ENCODE measurements at regions of chr12 and their contacts with region 1.

Region 1: GRCh38 chr12:130916251-130916911 is 37.3 kb upstream of the ADGRD1 start:
- DNase-seq: peak; percentile 82
- H3K4me3 ChIP-seq: peak overlapping the region in 1 of 2 experiments; percentile 32; a peak in 1 of 4 replicates
- H3K27ac ChIP-seq: no peak overlapping the region
- H3K4me1 ChIP-seq: peaks cover 0 to 4% of the 10 kb centered on the region in 2 experiments; a peak in 1 of 4 replicates
- H3K27me3 ChIP-seq: no peaks in the 10 kb centered on the region
- CTCF ChIP-seq: peak; percentile 31
- EP300 ChIP-seq: no peak
- RAD21 ChIP-seq: peak; percentile 96

Region 2: GRCh38 chr12:130589540-130590317 is 326.7 kb before region 1 on chr12:
- CTCF ChIA-PET with region 1: no interaction called
- POLR2A ChIA-PET with region 1: no interaction called
- DNase-seq: no peak
- H3K4me3 ChIP-seq: no peak overlapping the region
- H3K27ac ChIP-seq: peak overlapping the region in 1 of 2 experiments; percentile 95; a peak in 2 of 4 replicates
- H3K4me1 ChIP-seq: peaks cover 0 to 53% of the 10 kb centered on the region in 2 experiments; a peak in 2 of 4 replicates
- H3K27me3 ChIP-seq: no peaks in the 10 kb centered on the region
- CTCF ChIP-seq: no peak
- EP300 ChIP-seq: no peak
- RAD21 ChIP-seq: no peak

Region 3: GRCh38 chr12:130933269-130933995 is 17.1 kb after region 1 on chr12:
- CTCF ChIA-PET with region 1: interaction called, 29 read pairs
- POLR2A ChIA-PET with region 1: no interaction called
- DNase-seq: no peak
- H3K4me3 ChIP-seq: no peak overlapping the region
- H3K27ac ChIP-seq: no peak overlapping the region
- H3K4me1 ChIP-seq: peaks cover 0 to 3% of the 10 kb centered on the region in 2 experiments; a peak in 1 of 4 replicates
- H3K27me3 ChIP-seq: no peaks in the 10 kb centered on the region
- CTCF ChIP-seq: no peak
- EP300 ChIP-seq: no peak
- RAD21 ChIP-seq: no peak

Region 4: DNA sequence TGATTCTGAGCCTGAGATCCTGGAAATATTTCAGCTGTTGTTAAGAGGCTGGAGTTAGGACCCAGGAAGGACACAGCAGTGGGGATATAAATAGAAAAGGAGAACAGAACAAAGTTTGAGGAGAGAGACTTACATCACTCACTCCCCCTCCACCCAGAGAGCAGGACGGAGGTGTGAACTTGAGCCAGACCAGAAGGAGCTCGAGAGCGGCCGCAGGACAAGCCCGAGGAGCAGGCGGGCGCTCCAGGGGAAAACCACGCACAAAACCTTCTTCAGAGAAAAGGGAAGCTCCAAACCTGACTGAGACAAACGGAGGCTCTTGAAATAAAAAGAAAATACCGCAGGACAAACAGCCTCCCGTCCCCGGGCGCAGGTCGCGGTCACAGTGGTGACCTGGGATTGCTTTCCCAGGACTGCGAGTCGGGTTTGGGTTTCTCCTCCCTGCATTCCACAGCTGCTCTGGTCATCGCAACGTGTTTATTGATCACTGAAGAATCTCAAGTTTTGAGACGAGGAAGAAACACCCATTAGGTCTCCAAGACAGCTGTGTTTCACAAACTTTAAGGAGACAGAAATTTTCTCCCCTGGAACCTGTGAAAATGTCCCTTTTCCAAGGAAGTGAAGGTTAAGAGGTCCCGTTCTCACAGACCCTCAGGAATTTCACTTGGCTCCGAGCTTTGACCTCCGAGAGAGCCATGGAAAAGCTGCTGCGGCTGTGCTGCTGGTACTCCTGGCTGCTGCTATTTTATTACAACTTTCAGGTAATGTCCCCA is 37.6 kb after region 1 on chr12 and contains the start of gene ADGRD1:
- CTCF ChIA-PET with region 1: interaction called, 10 read pairs
- POLR2A ChIA-PET with region 1: no interaction called
- DNase-seq: no peak
- H3K4me3 ChIP-seq: no peak within 1 kb of the TSS
- H3K27ac ChIP-seq: peak within 1 kb of the TSS in 1 of 2 experiments; percentile 93; a peak in 2 of 4 replicates
- H3K4me1 ChIP-seq: peaks cover 0 to 33% of the 10 kb centered on the region in 2 experiments; a peak in 2 of 4 replicates
- H3K27me3 ChIP-seq: no peaks in the 10 kb centered on the region
- CTCF ChIP-seq: no peak
- EP300 ChIP-seq: no peak
- RAD21 ChIP-seq: no peak
- polyA plus RNA-seq, gene ADGRD1: not detected in 2 replicates

Region 5: GRCh38 chr12:131454418-131455217 is 538.2 kb after region 1 on chr12:
- CTCF ChIA-PET with region 1: interaction called, 13 read pairs
- POLR2A ChIA-PET with region 1: no interaction called
- DNase-seq: peak; percentile 90
- H3K4me3 ChIP-seq: no peak overlapping the region
- H3K27ac ChIP-seq: no peak overlapping the region
- H3K4me1 ChIP-seq: peaks cover 0 to 4% of the 10 kb centered on the region in 2 experiments; a peak in 1 of 4 replicates
- H3K27me3 ChIP-seq: no peaks in the 10 kb centered on the region
- CTCF ChIP-seq: no peak
- EP300 ChIP-seq: no peak
- RAD21 ChIP-seq: peak; percentile 80

Region 6: DNA sequence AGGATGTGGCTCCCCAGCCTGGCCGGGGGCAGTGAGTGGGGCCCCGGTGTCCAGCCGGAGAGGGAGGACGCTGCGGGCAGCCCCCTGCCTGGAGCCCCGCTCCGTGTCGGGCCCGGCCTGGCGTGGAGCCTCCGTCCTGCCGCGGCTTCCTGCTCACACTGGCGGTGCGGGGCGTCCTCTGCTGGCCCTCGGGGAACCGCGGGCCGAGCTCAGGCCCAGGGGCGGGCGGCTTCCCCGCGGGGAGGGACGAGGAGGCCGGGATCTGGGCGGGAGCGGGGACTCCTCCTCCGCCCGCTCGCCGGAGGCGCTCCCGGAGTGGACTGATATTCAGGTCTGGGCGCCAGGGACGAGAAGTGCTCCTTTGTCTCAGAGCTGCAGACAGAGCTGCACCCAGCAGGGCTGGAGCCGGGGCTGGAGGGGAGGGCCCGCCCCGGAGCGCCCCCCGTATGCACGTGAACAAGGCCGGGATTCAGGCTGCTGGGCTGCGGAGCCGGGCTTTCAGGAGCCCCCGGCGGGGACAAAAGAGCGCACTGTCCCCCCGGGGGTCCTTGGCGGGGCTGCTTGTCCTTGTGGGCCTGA is 914.0 kb after region 1 on chr12:
- CTCF ChIA-PET with region 1: interaction called, 21 read pairs
- POLR2A ChIA-PET with region 1: no interaction called
- DNase-seq: peak; percentile 87
- H3K4me3 ChIP-seq: peak overlapping the region; percentile 54 to 73
- H3K27ac ChIP-seq: peak overlapping the region; percentile 50
- H3K4me1 ChIP-seq: peaks cover 3 to 34% of the 10 kb centered on the region in 2 experiments; a peak in 1 of 4 replicates
- H3K27me3 ChIP-seq: no peaks in the 10 kb centered on the region
- CTCF ChIP-seq: peak; percentile 60
- EP300 ChIP-seq: no peak
- RAD21 ChIP-seq: peak; percentile 65

Measured in SK-N-SH (cell line).